Psoas muscle (tissue), 8 donors: ENCODE measurements at regions of chr9 and their contacts with region 1.

Region 1: GRCh38 chr9:129383561-129384416 is 205.7 kb upstream of the IER5L start:
- DNase-seq: peak; percentile 86 to 93
- ATAC-seq: peak; percentile 81 to 90 (median 86)
- H3K4me3 ChIP-seq: peak overlapping the region; percentile 78
- H3K27ac ChIP-seq: peak overlapping the region; percentile 87
- H3K4me1 ChIP-seq: peaks cover 10% of the 10 kb centered on the region
- H3K27me3 ChIP-seq: no peaks in the 10 kb centered on the region
- CTCF ChIP-seq: no peak

Region 2: DNA sequence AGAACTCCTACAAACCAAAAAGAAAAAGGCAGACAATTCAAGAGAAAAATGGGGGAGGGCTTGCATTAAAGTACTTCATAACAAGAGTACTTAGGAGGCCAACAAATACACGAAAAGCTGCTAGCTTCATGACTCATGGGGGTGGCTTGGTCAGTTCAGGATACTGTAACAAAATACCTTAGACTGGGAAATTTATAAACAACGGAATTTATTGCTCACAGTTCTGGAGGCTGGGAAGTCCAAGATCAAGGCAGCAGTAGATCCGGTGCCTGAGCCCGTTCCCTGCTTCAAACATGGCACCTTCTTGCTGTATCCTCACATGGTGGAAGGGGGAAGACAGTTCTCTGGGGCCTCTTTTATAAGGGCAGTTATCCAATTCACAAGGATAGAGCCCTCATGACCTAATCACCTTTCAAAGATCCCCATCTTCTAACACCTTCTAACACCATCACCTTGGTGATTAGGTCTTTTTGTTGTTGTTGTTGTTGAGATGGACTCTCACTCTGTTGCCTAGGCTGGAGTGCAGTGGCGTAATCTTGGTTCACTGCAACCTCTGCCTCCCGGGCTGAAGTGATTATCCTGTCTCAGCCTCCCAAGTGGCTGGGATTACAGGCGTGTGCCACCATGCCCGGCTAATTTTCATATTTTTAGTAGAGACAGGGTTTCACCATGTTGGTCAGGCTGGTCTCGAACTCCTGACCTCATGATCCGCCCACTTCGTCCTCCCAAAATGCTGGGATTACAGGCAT is 125.9 kb after region 1 on chr9:
- intact Hi-C with region 1: no loop called
- DNase-seq: no peak
- ATAC-seq: no peak
- H3K4me3 ChIP-seq: no peak overlapping the region
- H3K27ac ChIP-seq: no peak overlapping the region
- H3K4me1 ChIP-seq: no peaks in the 10 kb centered on the region
- H3K27me3 ChIP-seq: peaks cover 0 to 2% (median 0%) of the 10 kb centered on the region in 3 donors
- CTCF ChIP-seq: no peak

Region 3: GRCh38 chr9:129610473-129611301 is 226.9 kb after region 1 on chr9:
- intact Hi-C with region 1: loop called in 1 of 2 experiments (anchors 5 kb)
- DNase-seq: peak; percentile 78 to 87
- ATAC-seq: peak; percentile 71 to 86 (median 81)
- H3K4me3 ChIP-seq: peak overlapping the region; percentile 73
- H3K27ac ChIP-seq: peak overlapping the region; percentile 74
- H3K4me1 ChIP-seq: peaks cover 18% of the 10 kb centered on the region
- H3K27me3 ChIP-seq: no peaks in the 10 kb centered on the region
- CTCF ChIP-seq: peak; percentile 96

Region 4: GRCh38 chr9:129884220-129885017 is 500.6 kb after region 1 on chr9:
- intact Hi-C with region 1: no loop called
- DNase-seq: peak; percentile 89 to 92
- ATAC-seq: peak; percentile 69 to 84 (median 74)
- H3K4me3 ChIP-seq: peak overlapping the region; percentile 55
- H3K27ac ChIP-seq: peak overlapping the region; percentile 66
- H3K4me1 ChIP-seq: peaks cover 18% of the 10 kb centered on the region
- H3K27me3 ChIP-seq: no peaks in the 10 kb centered on the region
- CTCF ChIP-seq: no peak